ENCODE measurements at regions of chr9 and their contacts with region 1.

Region 1: GRCh38 chr9:125428060-125428901 is 166.7 kb downstream of the GAPVD1 start:
- DNase-seq: peak in 1 of 2 donors; percentile 58
- ATAC-seq: peak; percentile 53 to 85 (median 69)
- H3K4me3 ChIP-seq: no peak overlapping the region
- H3K27ac ChIP-seq: no peak overlapping the region
- H3K4me1 ChIP-seq: no peaks in the 10 kb centered on the region
- H3K27me3 ChIP-seq: no peaks in the 10 kb centered on the region
- CTCF ChIP-seq: peak; percentile 48

Region 2: DNA sequence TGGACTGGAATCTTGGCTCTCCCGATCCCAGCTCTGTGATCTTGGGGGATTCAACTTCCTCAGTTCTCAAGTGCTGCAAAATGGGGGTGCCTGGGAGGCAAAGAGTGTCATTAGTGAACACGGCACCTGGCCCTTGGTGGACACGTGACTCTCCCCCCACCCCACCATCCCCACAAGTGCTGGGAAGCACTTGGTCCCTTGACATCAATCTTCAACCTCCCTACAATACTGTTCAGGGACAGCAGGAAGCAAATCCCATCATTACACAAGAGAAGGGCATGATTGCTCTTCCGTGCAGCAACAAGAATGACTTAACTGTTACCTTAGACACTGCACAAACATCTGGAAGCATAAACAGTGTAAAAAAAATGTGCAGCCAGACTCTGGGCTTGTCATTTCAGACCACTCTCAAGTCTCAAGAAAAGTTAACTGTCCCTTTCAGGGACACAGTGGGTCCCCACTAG is 1074.4 kb before region 1 on chr9:
- intact Hi-C with region 1: loop called in 1 of 2 experiments (anchors 5 kb)
- DNase-seq: no peak
- ATAC-seq: peak in 2 of 4 donors; percentile 21 to 23
- H3K4me3 ChIP-seq: no peak overlapping the region
- H3K27ac ChIP-seq: no peak overlapping the region
- H3K4me1 ChIP-seq: no peaks in the 10 kb centered on the region
- H3K27me3 ChIP-seq: no peaks in the 10 kb centered on the region
- CTCF ChIP-seq: no peak

Region 3: DNA sequence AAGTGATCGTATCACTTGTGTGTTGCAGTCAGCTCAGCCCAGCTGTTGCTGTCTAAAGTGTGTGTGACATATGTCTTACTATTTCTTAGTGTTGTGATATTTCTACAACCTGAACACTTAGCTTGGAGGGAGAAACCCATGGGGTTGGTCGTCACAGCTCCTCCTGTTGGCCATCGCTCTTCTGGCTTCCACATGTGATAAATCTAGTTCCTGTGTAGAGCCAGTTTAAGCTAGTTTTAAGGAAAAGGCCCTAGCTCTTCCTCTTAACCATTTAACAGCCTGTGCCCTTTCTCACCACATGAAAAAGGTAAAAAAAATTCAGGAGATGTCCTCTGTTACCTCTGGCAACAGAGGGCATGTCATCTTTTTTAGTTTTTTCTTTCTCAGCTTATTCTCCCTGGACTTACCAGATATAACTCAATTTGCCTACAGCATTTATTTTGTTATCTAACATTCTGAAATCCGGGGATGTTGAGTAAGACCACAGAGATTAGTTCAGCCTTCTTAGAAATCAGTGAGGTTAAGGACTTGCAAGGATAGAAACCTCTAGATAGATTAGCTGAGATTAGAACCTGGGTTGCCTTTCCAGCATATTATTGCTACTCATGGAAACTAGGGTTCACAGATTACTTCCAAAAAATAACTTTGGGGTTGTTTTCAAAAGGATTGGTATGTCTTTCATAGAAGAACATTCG is 66.3 kb before region 1 on chr9:
- intact Hi-C with region 1: no loop called
- DNase-seq: no peak
- ATAC-seq: no peak
- H3K4me3 ChIP-seq: no peak overlapping the region
- H3K27ac ChIP-seq: no peak overlapping the region
- H3K4me1 ChIP-seq: no peaks in the 10 kb centered on the region
- H3K27me3 ChIP-seq: no peaks in the 10 kb centered on the region
- CTCF ChIP-seq: no peak

Region 4: DNA sequence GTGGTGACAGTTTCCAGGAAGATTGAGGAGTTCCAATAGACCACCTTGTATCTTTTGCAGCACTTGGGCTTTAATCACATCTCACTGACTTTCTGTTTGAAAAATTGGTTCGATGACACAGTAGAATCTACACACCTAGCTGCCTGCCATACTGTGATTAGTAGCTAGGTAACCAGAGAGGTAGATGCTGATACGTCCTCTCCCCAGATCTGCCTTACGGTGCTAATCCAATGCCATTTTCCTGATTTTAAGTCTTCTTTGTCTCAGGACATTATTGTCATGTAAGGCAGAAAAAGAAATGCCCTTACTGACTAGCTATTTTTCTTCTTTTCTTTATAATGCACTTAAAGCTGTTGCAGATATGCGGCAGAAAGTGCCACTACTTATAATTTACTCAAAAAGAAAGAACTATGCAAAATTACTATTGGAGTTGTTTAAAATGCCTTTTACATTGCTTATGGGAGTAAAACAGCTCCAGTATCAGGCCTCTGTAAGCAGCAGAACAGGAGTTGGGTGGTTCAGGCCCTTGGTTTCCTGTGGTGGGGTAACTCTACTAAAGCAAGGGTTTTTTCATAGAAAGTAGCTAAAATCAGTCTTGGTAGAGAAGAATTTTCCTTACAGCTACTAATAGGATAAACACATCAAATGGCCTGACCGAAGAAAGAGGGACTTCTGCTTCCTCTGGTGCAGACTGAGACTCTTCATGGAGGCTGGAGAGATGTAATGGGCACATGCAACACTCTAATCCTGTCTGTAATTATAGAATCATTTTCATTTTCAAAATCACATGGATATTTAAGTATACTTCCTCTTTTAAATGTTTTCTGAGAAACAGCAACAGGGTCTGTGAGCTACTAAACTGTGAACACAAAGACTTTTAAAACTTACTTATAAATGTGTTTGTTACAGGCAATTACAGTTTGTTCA is 101.6 kb after region 1 on chr9:
- intact Hi-C with region 1: no loop called
- DNase-seq: no peak
- ATAC-seq: no peak
- H3K4me3 ChIP-seq: no peak overlapping the region
- H3K27ac ChIP-seq: no peak overlapping the region
- H3K4me1 ChIP-seq: no peaks in the 10 kb centered on the region
- H3K27me3 ChIP-seq: no peaks in the 10 kb centered on the region
- CTCF ChIP-seq: no peak

Measured in psoas muscle (tissue), 8 donors.